Posterior vena cava (tissue), 2 donors: ENCODE measurements at regions of chr4 and their contacts with region 1.

Region 1: GRCh38 chr4:34676390-34676789 is 1567.9 kb downstream of the ARAP2 start:
- DNase-seq: no peak

Region 2: DNA sequence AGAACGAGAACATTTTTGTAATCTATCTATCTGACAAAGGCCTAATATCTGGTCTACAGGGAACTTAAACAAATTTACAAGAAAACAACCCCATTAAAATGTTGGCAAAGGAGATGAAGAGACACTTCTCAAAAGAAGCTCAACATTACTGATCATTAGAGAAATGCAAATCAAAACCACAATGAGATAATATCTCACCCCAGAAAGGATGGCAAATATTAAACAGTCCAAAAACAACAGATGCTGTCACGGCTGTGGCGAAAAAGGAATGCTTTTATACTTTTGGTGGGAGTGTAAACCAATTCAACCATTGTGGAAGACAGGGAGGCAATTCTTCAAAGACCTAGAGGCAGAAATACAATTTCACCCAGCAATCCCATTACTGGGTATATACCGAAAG is 716.9 kb before region 1 on chr4:
- intact Hi-C with region 1: loop called in 1 of 2 experiments (anchors 10 kb)
- DNase-seq: no peak

Region 3: GRCh38 chr4:36249610-36250009 is 1573.2 kb after region 1 on chr4:
- intact Hi-C with region 1: no loop called
- DNase-seq: no peak